Esophagus muscularis mucosa (tissue), 4 donors: ENCODE measurements at regions of chr12 and their contacts with region 1.

Region 1: DNA sequence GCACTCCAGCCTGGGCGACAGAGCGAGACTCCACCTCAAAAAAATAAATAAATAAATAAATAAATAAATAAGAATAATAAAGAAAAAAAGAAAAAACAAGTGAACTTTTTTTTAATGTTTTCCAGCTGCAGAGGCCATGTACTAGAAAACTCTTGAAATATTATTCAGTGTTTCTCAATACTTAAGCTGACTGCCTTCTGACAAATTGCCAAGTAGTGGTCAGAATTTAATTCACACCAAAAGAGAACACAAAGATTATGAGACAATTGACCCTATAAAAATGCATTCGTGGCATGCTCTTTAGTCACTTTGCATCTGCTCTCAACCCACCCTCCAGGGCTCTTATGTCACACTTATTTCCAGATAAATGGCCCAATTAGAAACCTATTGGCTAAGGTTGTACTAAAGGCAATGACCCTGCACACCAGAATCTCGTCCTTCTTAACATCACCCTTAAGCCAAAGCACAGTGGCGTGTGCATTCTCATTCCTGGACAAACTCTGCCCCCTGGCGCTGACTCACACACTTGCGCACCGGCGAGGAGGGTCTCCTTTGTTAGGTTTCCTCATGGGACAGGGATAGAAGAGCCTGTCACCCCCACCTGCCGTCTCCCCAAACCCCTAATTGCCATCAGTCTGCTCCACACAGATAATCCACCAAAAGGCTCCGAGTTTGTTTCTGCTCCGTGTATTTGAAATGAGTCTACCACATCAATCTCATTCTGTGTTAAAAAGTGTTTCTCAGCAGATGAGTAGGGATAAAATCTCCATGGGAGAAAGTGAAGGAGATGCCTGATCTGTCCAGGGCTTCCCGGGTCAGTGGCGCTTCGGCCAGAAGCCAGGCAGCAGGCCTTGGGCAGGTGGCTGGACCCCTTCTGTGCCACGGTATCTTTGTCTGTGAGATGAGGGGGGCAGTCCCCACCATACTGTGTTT is 73.1 kb upstream of the CEP83 start:
- DNase-seq: peak; percentile 94
- H3K4me3 ChIP-seq: no peak overlapping the region
- H3K27ac ChIP-seq: no peak overlapping the region
- H3K4me1 ChIP-seq: peaks cover 0 to 11% (median 5%) of the 10 kb centered on the region in 4 donors
- H3K27me3 ChIP-seq: no peaks in the 10 kb centered on the region
- CTCF ChIP-seq: peak; percentile 76 to 82 (median 79)
- EP300 ChIP-seq: no peak
- POLR2A ChIP-seq: no peak

Region 2: GRCh38 chr12:94133964-94134795 is 398.6 kb before region 1 on chr12:
- intact Hi-C with region 1: loop called (anchors 2 kb)
- DNase-seq: no peak
- H3K4me3 ChIP-seq: no peak overlapping the region
- H3K27ac ChIP-seq: no peak overlapping the region
- H3K4me1 ChIP-seq: no peaks in the 10 kb centered on the region
- H3K27me3 ChIP-seq: peaks cover 0 to 6% (median 0%) of the 10 kb centered on the region in 4 donors
- CTCF ChIP-seq: peak; percentile 68 to 81 (median 75)
- EP300 ChIP-seq: no peak
- POLR2A ChIP-seq: no peak

Region 3: GRCh38 chr12:94222351-94223084 is 310.2 kb before region 1 on chr12:
- intact Hi-C with region 1: no loop called
- DNase-seq: peak; percentile 42
- H3K4me3 ChIP-seq: no peak overlapping the region
- H3K27ac ChIP-seq: no peak overlapping the region
- H3K4me1 ChIP-seq: no peaks in the 10 kb centered on the region
- H3K27me3 ChIP-seq: no peaks in the 10 kb centered on the region
- CTCF ChIP-seq: no peak
- EP300 ChIP-seq: no peak
- POLR2A ChIP-seq: no peak

Region 4: DNA sequence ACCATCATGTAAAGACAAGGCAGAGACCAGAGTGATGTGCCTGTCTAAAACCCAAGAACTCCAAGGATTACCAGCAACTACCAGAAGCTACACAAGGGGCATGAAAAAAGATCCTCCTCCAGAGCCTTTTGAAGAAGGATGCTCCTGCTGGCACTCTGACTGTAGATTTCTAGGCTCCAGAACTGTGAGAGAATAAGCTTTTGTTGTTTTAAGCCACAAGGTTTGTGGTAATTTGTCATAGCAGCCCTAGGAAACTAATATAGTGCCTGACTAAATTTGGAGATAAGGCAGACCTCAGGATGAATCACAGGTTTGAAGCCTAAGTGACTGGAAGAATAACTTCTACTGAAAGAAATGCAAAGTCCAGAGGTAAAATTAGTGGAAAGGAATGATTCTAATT is 206.0 kb before region 1 on chr12:
- intact Hi-C with region 1: loop called (anchors 5 kb)
- DNase-seq: no peak
- H3K4me3 ChIP-seq: no peak overlapping the region
- H3K27ac ChIP-seq: no peak overlapping the region
- H3K4me1 ChIP-seq: no peaks in the 10 kb centered on the region
- H3K27me3 ChIP-seq: no peaks in the 10 kb centered on the region
- CTCF ChIP-seq: no peak
- EP300 ChIP-seq: no peak
- POLR2A ChIP-seq: no peak

Region 5: DNA sequence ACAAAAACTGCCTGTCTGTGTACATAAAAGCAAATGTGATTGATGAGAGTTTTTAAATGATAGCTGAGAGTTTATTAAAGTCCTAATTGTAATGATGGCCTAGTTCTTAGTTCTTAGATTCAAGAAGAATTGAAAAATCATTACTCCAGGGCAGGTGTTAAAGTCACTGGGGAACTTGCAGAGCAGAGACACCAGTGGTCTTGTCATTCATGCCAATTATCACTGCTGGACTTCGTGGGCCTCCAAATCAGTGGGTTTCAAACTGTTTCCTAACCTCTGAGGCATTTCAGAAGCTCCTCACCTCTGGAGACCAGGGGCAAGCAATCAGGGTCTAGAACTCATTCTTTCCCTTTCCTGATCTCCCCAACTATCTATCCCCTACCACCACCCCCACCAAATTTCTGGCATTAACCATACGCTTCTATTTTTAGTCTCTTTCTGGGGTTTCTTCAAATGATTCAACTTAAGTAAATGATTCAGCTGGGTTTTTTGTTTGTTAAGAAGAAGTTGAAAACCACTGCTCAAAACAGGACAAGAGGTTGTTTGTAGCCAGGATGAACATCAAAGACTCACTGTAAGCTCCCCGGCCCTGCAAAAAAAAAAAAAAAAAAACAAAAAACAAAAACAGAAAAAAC is 153.2 kb before region 1 on chr12:
- intact Hi-C with region 1: no loop called
- DNase-seq: no peak
- H3K4me3 ChIP-seq: no peak overlapping the region
- H3K27ac ChIP-seq: no peak overlapping the region
- H3K4me1 ChIP-seq: no peaks in the 10 kb centered on the region
- H3K27me3 ChIP-seq: no peaks in the 10 kb centered on the region
- CTCF ChIP-seq: no peak
- EP300 ChIP-seq: no peak
- POLR2A ChIP-seq: no peak

Region 6: GRCh38 chr12:94575645-94576403 is 43.1 kb after region 1 on chr12:
- intact Hi-C with region 1: no loop called
- DNase-seq: no peak
- H3K4me3 ChIP-seq: no peak overlapping the region
- H3K27ac ChIP-seq: no peak overlapping the region
- H3K4me1 ChIP-seq: peaks cover 0 to 13% (median 0%) of the 10 kb centered on the region in 4 donors
- H3K27me3 ChIP-seq: no peaks in the 10 kb centered on the region
- CTCF ChIP-seq: no peak
- EP300 ChIP-seq: no peak
- POLR2A ChIP-seq: no peak